Spleen (tissue), 13 donors: ENCODE measurements at regions of chr15 and their contacts with region 1.

Region 1: DNA sequence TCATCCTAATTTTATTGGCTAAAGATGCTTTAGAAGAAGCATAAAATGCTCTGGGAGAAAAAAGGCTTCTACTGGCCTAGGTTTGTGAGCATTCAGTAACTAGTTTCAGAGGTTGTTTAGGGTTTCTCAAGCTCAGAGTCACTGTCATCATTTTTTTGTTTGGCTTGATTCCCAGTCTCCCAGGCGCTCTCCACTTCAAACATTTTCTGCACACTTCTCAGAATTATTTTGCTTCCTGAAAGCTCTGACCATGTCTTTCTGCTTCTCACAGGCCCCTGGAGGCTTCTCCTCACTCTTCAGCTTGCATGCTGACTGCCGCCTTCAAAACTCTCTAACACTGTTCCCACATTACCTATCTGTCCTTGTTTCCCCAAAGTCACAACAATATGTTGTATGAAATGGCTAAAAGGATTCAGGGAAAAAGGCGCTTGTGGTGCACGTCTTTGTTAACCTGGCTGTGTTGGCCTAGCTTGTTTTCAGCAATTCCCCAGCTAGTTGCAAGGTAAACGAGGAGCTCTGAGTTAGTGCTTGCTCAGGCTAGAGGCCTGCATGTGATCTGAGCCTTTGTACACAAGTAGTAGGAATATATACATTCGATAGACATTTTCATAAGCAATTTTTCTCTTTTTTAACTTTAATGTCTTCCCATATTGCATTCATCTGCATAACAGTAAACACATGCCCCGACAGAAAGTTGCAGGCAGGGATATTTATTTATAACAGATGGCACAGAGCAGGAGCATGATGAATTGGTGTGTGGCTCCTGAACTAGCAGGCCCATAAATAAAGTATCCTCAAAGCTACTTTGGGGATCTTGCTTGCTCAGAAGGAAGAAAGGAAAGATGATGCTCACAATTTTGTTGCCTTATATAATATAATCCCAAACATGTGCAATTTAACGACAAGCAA is 129.2 kb upstream of the DPH6 start:
- DNase-seq: no peak
- H3K4me3 ChIP-seq: no peak overlapping the region
- H3K27ac ChIP-seq: peak overlapping the region in 6 of 8 donors; percentile 20 to 78 (median 62)
- H3K4me1 ChIP-seq: peaks cover 0 to 33% (median 16%) of the 10 kb centered on the region in 6 donors
- H3K27me3 ChIP-seq: no peaks in the 10 kb centered on the region
- CTCF ChIP-seq: no peak
- POLR2A ChIP-seq: no peak

Region 2: DNA sequence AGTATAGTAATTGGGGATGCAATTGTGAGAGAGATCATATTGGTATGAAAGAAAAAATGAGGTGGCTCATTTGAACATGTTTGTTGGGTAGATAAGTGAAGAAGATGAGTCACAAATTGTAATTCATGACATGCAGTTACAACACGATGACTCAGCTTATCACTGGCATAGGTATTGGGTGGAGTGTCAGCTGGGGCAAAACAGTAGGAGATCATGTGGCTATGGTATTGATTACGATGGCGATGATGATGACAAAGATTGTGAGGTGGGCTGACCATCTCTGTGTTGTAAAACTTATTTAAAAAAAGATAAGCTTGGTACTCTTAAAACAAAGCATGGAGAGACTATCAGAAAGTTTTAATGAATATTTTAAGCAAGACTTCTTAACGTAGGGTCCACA is 117.6 kb before region 1 on chr15:
- intact Hi-C with region 1: loop called (anchors 10 kb)
- DNase-seq: no peak
- H3K4me3 ChIP-seq: no peak overlapping the region
- H3K27ac ChIP-seq: no peak overlapping the region
- H3K4me1 ChIP-seq: no peaks in the 10 kb centered on the region
- H3K27me3 ChIP-seq: no peaks in the 10 kb centered on the region
- CTCF ChIP-seq: no peak
- POLR2A ChIP-seq: no peak